A549 (cell line): ENCODE measurements at regions of chr10 and their contacts with region 1.

Region 1: GRCh38 chr10:122565728-122566206 is 5.2 kb downstream of the DMBT1 start:
- DNase-seq: peak; percentile 61 to 85
- ATAC-seq: peak; percentile 65 to 74
- H3K4me3 ChIP-seq: no peak overlapping the region
- H3K27ac ChIP-seq: peak overlapping the region in 1 of 2 experiments; percentile 49; a peak in 2 of 6 replicates
- H3K4me1 ChIP-seq: peaks cover 9% of the 10 kb centered on the region; the same call in 1 of the 3 replicates
- CTCF ChIP-seq: peak; percentile 92
- EP300 ChIP-seq: no peak
- POLR2A ChIP-seq: no peak
- RAD21 ChIP-seq: peak; percentile 94 to 95

Region 2: GRCh38 chr10:122298598-122299301 is 267.0 kb before region 1 on chr10:
- CTCF ChIA-PET with region 1: interaction called, 136 read pairs
- POLR2A ChIA-PET with region 1: interaction called, 3 read pairs
- DNase-seq: peak; percentile 80 to 89
- ATAC-seq: peak; percentile 82 to 93
- H3K4me3 ChIP-seq: peak overlapping the region; percentile 32; the same call in 2 of the 3 replicates
- H3K27ac ChIP-seq: peak overlapping the region; percentile 88 to 92
- H3K4me1 ChIP-seq: peaks cover 23% of the 10 kb centered on the region
- CTCF ChIP-seq: peak; percentile 96
- EP300 ChIP-seq: no peak
- POLR2A ChIP-seq: no peak
- RAD21 ChIP-seq: peak; percentile 99

Region 3: GRCh38 chr10:122435212-122435827 is 130.4 kb before region 1 on chr10:
- CTCF ChIA-PET with region 1: interaction called, 35 read pairs
- POLR2A ChIA-PET with region 1: no interaction called
- DNase-seq: peak; percentile 36 to 48
- ATAC-seq: peak; percentile 8 to 72; a peak in 4 of 6 replicates
- H3K4me3 ChIP-seq: no peak overlapping the region
- H3K27ac ChIP-seq: no peak overlapping the region
- H3K4me1 ChIP-seq: no peaks in the 10 kb centered on the region
- CTCF ChIP-seq: peak; percentile 87
- EP300 ChIP-seq: no peak
- POLR2A ChIP-seq: no peak
- RAD21 ChIP-seq: peak; percentile 90 to 94

Region 4: DNA sequence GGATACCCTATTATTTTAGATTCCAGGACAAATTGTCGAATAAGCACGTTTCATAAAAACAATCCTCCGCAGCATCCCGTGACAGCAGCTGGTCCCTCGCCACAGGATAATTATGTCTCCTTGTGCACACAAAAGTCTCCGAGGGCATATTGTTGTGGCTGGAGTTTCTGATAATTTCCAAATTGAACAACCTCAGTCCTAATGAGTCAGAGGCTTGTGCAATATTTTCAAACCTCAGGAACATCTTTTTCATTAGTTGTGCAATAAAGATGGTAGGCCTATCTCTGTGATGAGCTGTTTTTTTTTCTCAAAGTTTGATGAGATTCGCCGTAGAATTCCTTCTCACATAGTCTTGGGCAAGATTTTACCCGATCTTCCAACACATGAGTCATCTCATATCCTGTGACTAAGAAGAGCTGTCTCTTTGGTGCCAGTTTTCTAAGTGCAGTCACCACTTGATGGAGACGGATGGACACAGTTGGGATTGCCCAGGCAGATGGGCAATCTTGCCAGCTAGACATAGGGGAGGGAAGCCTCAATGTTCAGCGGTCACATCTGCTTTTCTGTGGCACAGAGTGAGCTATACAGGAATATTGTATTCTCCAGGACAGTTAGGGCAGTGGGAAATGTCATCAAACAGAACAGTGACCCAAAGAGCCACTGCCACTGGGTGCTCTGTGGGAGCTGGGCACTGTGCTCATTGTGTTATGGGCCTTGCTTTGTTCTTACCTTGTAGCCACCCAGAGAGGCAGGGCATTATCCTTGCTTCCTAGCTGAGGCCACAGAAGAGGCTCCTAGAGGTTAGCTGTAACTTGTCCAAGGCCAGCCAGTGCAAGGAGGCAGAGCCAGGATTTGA is 96.6 kb before region 1 on chr10:
- CTCF ChIA-PET with region 1: interaction called, 19 read pairs
- POLR2A ChIA-PET with region 1: interaction called, 8 read pairs
- DNase-seq: peak; percentile 88 to 89
- ATAC-seq: peak; percentile 95 to 98
- H3K4me3 ChIP-seq: no peak overlapping the region
- H3K27ac ChIP-seq: peak overlapping the region; percentile 68 to 86
- H3K4me1 ChIP-seq: peaks cover 24% of the 10 kb centered on the region
- CTCF ChIP-seq: peak; percentile 29; the same call in 2 of the 3 replicates
- EP300 ChIP-seq: peak; percentile 82 to 84; a peak in 3 of 5 replicates
- POLR2A ChIP-seq: no peak
- RAD21 ChIP-seq: peak; percentile 50 to 67

Region 5: DNA sequence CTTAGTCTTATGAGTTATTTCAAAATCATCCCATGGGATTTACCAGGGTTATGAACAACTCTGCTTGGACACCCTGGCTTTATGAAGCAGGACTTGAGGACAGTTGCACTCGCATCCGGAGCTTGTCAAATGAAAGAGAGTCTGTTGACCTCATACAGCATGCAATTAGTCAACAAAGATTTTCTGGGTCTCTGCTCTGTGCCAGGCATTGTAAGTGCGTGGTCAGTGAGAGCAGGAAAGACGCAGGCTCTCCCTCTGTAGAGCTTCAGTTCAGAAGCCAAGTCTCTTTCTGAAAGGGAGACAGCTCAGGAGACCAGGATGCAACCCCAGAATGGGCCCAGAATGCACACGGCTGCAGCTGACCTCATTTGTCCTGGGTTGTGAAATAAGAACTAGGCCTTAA is 50.7 kb before region 1 on chr10:
- CTCF ChIA-PET with region 1: interaction called, 14 read pairs
- POLR2A ChIA-PET with region 1: no interaction called
- DNase-seq: no peak
- ATAC-seq: no peak
- H3K4me3 ChIP-seq: no peak overlapping the region
- H3K27ac ChIP-seq: no peak overlapping the region
- H3K4me1 ChIP-seq: no peaks in the 10 kb centered on the region
- CTCF ChIP-seq: no peak
- EP300 ChIP-seq: no peak
- POLR2A ChIP-seq: no peak
- RAD21 ChIP-seq: no peak

Region 6: GRCh38 chr10:122577311-122577885 is 11.6 kb after region 1 on chr10:
- CTCF ChIA-PET with region 1: interaction called, 25 read pairs
- POLR2A ChIA-PET with region 1: no interaction called
- DNase-seq: no peak
- ATAC-seq: no peak
- H3K4me3 ChIP-seq: no peak overlapping the region
- H3K27ac ChIP-seq: no peak overlapping the region
- H3K4me1 ChIP-seq: no peaks in the 10 kb centered on the region
- CTCF ChIP-seq: no peak
- EP300 ChIP-seq: no peak
- POLR2A ChIP-seq: no peak
- RAD21 ChIP-seq: no peak

Region 7: GRCh38 chr10:122637376-122637775 is 71.6 kb after region 1 on chr10:
- CTCF ChIA-PET with region 1: no interaction called
- POLR2A ChIA-PET with region 1: no interaction called
- DNase-seq: no peak
- ATAC-seq: no peak
- H3K4me3 ChIP-seq: no peak overlapping the region
- H3K27ac ChIP-seq: no peak overlapping the region
- H3K4me1 ChIP-seq: no peaks in the 10 kb centered on the region
- CTCF ChIP-seq: no peak
- EP300 ChIP-seq: no peak
- POLR2A ChIP-seq: no peak
- RAD21 ChIP-seq: no peak